PC-3 (cell line): ENCODE measurements at regions of chr15 and their contacts with region 1.

Region 1: GRCh38 chr15:45429974-45430792 is 51.8 kb upstream of the GATM start:
- DNase-seq: peak; percentile 70
- ATAC-seq: peak; percentile 93
- H3K4me3 ChIP-seq: peak overlapping the region; percentile 70
- H3K27ac ChIP-seq: no peak overlapping the region
- H3K4me1 ChIP-seq: peaks cover 14% of the 10 kb centered on the region; the same call in 1 of the 2 replicates
- H3K27me3 ChIP-seq: no peaks in the 10 kb centered on the region
- CTCF ChIP-seq: peak; percentile 100

Region 2: DNA sequence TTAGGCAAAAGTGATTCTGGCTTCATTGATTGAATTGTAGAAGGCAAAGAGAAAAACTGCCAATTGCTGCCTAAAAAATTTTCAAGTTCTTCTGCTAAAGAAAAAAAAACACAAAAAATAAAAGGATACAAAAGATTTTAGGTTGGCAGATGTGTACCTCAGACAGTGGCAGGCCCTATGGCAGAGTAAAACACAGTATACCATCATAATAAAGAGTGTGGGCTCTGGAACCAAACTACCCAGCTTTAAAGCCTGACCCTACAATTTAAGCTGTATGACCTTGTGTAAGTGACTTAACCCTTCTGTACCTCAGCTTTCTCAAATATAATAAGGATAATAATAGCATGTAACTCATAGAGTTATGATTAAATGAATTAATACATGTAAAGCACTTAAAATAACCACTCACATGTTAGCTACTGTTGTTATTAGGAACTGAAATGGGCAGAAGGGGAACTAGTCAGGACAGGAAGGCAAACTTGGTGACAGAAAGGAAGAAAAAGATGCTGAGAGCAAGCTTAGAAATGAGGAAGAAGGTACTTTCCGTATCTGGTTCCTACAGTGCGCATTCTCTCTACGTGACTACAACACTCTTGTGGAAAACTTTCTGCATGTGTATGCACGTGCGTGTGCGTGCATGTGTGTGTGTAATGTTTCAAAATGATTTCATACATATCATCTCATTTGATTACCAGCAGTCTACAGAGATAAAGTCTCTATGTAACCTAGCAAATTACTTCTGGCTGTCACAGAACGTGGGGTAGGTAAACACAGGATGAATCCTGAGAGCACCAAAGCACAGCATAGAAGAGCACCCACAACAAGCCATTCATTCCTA is 38.2 kb before region 1 on chr15:
- CTCF ChIA-PET with region 1: no interaction called
- POLR2A ChIA-PET with region 1: no interaction called
- intact Hi-C with region 1: no loop called
- DNase-seq: no peak
- ATAC-seq: no peak
- H3K4me3 ChIP-seq: no peak overlapping the region
- H3K27ac ChIP-seq: no peak overlapping the region
- H3K4me1 ChIP-seq: peaks cover 20% of the 10 kb centered on the region
- H3K27me3 ChIP-seq: no peaks in the 10 kb centered on the region
- CTCF ChIP-seq: no peak

Region 3: GRCh38 chr15:45499426-45499825 is 69.2 kb after region 1 on chr15:
- CTCF ChIA-PET with region 1: no interaction called
- POLR2A ChIA-PET with region 1: no interaction called
- intact Hi-C with region 1: loop called (anchors 5 kb)
- DNase-seq: no peak
- ATAC-seq: no peak
- H3K4me3 ChIP-seq: no peak overlapping the region
- H3K27ac ChIP-seq: no peak overlapping the region
- H3K4me1 ChIP-seq: no peaks in the 10 kb centered on the region
- H3K27me3 ChIP-seq: no peaks in the 10 kb centered on the region
- CTCF ChIP-seq: no peak

Region 4: DNA sequence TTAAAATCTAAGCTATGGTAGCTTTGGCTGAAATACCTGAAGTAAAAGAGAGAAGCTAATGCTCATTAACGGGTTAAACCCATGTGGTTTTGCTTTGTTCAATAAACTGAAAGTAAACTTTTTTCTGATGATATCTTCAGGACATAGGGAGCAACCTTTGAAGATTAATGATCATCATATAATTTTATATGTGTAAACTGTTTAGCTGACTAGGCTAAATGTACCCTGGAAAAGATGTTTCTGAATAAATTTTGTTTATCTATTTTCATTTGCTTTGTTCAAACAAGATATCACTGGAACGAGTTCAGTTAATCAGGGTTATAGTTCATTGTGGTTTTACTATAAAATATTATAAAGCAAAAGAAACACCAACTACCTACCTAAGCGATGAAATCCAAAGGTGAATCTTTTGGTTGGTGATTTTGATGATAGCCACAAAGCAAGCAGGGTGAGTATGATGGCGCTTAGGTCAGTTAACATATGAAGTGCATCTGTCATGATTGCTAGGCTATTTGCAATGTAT is 80.6 kb after region 1 on chr15:
- CTCF ChIA-PET with region 1: interaction called, 17 read pairs
- POLR2A ChIA-PET with region 1: no interaction called
- intact Hi-C with region 1: no loop called
- DNase-seq: no peak
- ATAC-seq: peak; percentile 13; the same call in 1 of the 2 replicates
- H3K4me3 ChIP-seq: no peak overlapping the region
- H3K27ac ChIP-seq: no peak overlapping the region
- H3K4me1 ChIP-seq: no peaks in the 10 kb centered on the region
- H3K27me3 ChIP-seq: no peaks in the 10 kb centered on the region
- CTCF ChIP-seq: no peak

Region 5: GRCh38 chr15:45705510-45706473 is 275.6 kb after region 1 on chr15:
- CTCF ChIA-PET with region 1: no interaction called
- POLR2A ChIA-PET with region 1: no interaction called
- intact Hi-C with region 1: no loop called
- DNase-seq: peak; percentile 86
- ATAC-seq: peak; percentile 92
- H3K4me3 ChIP-seq: peak overlapping the region; percentile 73
- H3K27ac ChIP-seq: no peak overlapping the region
- H3K4me1 ChIP-seq: peaks cover 4% of the 10 kb centered on the region; the same call in 1 of the 2 replicates
- H3K27me3 ChIP-seq: no peaks in the 10 kb centered on the region
- CTCF ChIP-seq: peak; percentile 78